Dendritic cell treated with granulocyte-macrophage colony-stimulating factor and Interleukin-4, amounts not matched to agents 40 ng/mL and 50 ng/mL, for 4 days (primary cell): ENCODE measurements at regions of chr10 and their contacts with region 1.

Region 1: GRCh38 chr10:27446091-27446918 is 57.8 kb upstream of the RAB18 start:
- H3K4me3 Mint-ChIP-seq: no peak overlapping the region
- H3K27ac Mint-ChIP-seq: peak overlapping the region; percentile 47
- H3K4me1 Mint-ChIP-seq: peaks cover 17% of the 10 kb centered on the region
- H3K27me3 Mint-ChIP-seq: no peaks in the 10 kb centered on the region

Region 2: GRCh38 chr10:27485986-27486385 is 39.7 kb after region 1 on chr10:
- intact Hi-C with region 1: loop called (anchors 5 kb)
- H3K4me3 Mint-ChIP-seq: no peak overlapping the region
- H3K27ac Mint-ChIP-seq: no peak overlapping the region
- H3K4me1 Mint-ChIP-seq: peaks cover 11% of the 10 kb centered on the region
- H3K27me3 Mint-ChIP-seq: no peaks in the 10 kb centered on the region

Region 3: GRCh38 chr10:27550823-27551222 is 104.5 kb after region 1 on chr10:
- intact Hi-C with region 1: loop called (anchors 5 kb)
- H3K4me3 Mint-ChIP-seq: no peak overlapping the region
- H3K27ac Mint-ChIP-seq: no peak overlapping the region
- H3K4me1 Mint-ChIP-seq: no peaks in the 10 kb centered on the region
- H3K27me3 Mint-ChIP-seq: no peaks in the 10 kb centered on the region

Region 4: GRCh38 chr10:27661514-27662286 is 215.4 kb after region 1 on chr10:
- intact Hi-C with region 1: loop called (anchors 2 kb)
- H3K4me3 Mint-ChIP-seq: no peak overlapping the region
- H3K27ac Mint-ChIP-seq: peak overlapping the region; percentile 92
- H3K4me1 Mint-ChIP-seq: peaks cover 51% of the 10 kb centered on the region
- H3K27me3 Mint-ChIP-seq: no peaks in the 10 kb centered on the region